K562 (cell line): ENCODE measurements at regions of chr6 and their contacts with region 1.

Region 1: GRCh38 chr6:159852877-159853276 is 37.9 kb upstream of the MAS1 start:
- DNase-seq: peak in 1 of 4 experiments; percentile 18
- ATAC-seq: peak; percentile 62
- H3K4me3 ChIP-seq: no peak overlapping the region
- H3K27ac ChIP-seq: no peak overlapping the region
- H3K4me1 ChIP-seq: no peaks in the 10 kb centered on the region
- H3K27me3 ChIP-seq: peaks cover 3 to 4% of the 10 kb centered on the region in 2 experiments; a peak in 3 of 5 replicates
- CTCF ChIP-seq: peak; percentile 27 to 69 (median 47); a peak in 5 of 6 replicates
- EP300 ChIP-seq: no peak
- POLR2A ChIP-seq: no peak
- RAD21 ChIP-seq: peak; percentile 66 to 76

Region 2: DNA sequence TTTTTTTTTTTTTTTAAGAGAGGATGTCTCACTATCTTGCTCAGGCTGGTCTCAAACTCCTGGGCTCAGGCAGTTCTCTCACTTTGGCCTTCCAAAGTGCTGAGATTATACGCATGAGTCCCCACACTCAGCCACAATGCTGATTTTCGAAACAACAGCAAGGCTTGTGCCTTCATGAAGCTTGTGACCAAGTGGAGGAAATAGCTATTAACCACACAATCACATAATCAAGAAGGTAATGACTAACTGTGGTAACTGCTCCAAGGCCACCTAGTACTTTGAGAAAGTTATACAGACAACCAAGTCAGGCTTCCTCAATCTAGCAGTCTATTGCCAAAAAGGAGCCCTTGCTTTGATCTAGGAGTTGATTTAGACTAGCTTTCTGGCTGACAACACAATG is 206.1 kb before region 1 on chr6:
- CTCF ChIA-PET with region 1: no interaction called
- POLR2A ChIA-PET with region 1: no interaction called
- in situ Hi-C with region 1: no loop called
- intact Hi-C with region 1: no loop called
- DNase-seq: no peak
- ATAC-seq: no peak
- H3K4me3 ChIP-seq: no peak overlapping the region
- H3K27ac ChIP-seq: no peak overlapping the region
- H3K4me1 ChIP-seq: no peaks in the 10 kb centered on the region
- H3K27me3 ChIP-seq: no peaks in the 10 kb centered on the region; a peak in 1 of 5 replicates
- CTCF ChIP-seq: no peak
- EP300 ChIP-seq: no peak
- POLR2A ChIP-seq: no peak
- RAD21 ChIP-seq: no peak

Region 3: DNA sequence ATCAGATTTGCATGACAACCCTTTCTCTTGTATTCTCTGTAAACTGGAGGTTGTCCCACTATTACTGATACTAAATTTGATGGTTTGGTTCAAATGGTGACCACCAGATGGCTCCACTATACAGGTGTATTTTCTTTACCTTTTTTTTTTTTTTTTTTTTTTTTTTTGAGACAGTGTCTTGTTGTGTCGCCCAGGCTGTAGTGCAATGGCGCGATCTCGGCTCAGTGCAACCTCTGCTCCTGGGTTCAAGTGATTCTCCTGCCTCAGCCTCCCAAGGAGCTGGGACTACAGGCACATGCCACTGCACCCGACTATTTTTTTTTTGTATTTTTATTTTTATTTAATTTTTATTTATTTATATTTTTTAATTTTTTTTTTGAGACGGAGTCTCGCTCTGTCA is 132.2 kb before region 1 on chr6:
- CTCF ChIA-PET with region 1: interaction called, 4 read pairs
- POLR2A ChIA-PET with region 1: no interaction called
- in situ Hi-C with region 1: no loop called
- intact Hi-C with region 1: loop called (anchors 5 kb)
- DNase-seq: peak; percentile 51 to 67 (median 55)
- ATAC-seq: peak; percentile 42
- H3K4me3 ChIP-seq: no peak overlapping the region
- H3K27ac ChIP-seq: no peak overlapping the region
- H3K4me1 ChIP-seq: peaks cover 6 to 23% of the 10 kb centered on the region in 2 experiments
- H3K27me3 ChIP-seq: no peaks in the 10 kb centered on the region
- CTCF ChIP-seq: peak; percentile 21 to 59 (median 41); a peak in 4 of 6 replicates
- EP300 ChIP-seq: no peak
- POLR2A ChIP-seq: no peak
- RAD21 ChIP-seq: peak; percentile 17 to 18; a peak in 1 of 4 replicates